ENCODE measurements at regions of chr9 and their contacts with region 1.

Region 1: GRCh38 chr9:136277746-136278145 is 26.1 kb downstream of the CCDC187 start:
- DNase-seq: no peak
- H3K4me3 Mint-ChIP-seq: no peak overlapping the region
- H3K27ac Mint-ChIP-seq: no peak overlapping the region
- H3K4me1 Mint-ChIP-seq: peaks cover 2% of the 10 kb centered on the region
- H3K27me3 Mint-ChIP-seq: peaks cover 3% of the 10 kb centered on the region

Region 2: DNA sequence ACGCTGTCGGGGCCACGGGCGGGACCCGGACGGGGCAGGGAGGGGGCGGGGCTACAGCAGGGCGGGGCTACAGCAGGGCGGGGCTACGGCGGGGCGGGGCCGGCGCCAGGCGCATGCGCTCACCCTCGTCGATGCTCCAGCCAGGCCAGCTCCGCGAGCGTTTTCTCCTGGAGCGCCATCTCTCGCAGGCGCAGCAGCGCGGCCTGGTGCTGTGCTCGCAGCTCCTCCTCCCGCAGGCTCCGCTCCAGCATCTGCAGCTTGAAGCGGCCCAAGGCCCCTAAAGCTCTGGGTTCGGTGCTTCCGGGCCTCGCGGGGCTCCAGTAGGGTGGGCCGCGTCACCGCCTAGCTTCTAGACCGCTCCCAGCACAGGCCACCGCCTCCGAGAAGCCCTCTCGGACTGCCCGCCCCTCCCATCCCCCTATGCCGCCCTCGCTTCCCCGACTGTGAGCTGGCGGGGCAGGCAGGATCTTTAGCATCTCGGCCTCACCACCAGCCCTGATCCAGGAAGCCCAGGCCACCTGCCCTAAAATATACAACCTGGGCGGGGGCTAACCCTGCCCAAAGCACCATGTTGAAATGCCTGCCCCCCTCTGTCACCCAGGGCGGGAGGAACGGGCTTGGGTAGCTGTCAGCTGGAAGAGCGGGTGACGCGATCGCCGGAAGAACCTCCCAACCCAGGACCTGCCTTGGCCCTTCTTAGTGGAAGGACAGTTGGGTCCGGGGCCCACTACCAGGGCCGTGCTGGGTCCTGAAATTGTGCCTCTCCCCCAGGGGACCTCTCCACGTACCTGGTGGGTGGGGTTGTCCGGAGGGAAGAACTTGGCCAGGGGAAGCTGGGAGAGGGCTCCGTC is 10.3 kb before region 1 on chr9:
- CTCF ChIA-PET with region 1: interaction called, 12 read pairs
- intact Hi-C with region 1: no loop called
- DNase-seq: peak; percentile 85
- H3K4me3 Mint-ChIP-seq: peak overlapping the region; percentile 66
- H3K27ac Mint-ChIP-seq: peak overlapping the region; percentile 41
- H3K4me1 Mint-ChIP-seq: peaks cover 4% of the 10 kb centered on the region
- H3K27me3 Mint-ChIP-seq: peaks cover 2% of the 10 kb centered on the region

Measured in activated naive CD4-positive, alpha-beta T cell treated with anti-CD3 and anti-CD28 coated beads for 36 hours (primary cell).